Activated CD8-positive, alpha-beta memory T cell treated with anti-CD3 and anti-CD28 coated beads, Interleukin-2, amount 10 ng/mL, durations not matched to agents 7 days and 5 days (primary cell): ENCODE measurements at regions of chr17 and their contacts with region 1.

Region 1: DNA sequence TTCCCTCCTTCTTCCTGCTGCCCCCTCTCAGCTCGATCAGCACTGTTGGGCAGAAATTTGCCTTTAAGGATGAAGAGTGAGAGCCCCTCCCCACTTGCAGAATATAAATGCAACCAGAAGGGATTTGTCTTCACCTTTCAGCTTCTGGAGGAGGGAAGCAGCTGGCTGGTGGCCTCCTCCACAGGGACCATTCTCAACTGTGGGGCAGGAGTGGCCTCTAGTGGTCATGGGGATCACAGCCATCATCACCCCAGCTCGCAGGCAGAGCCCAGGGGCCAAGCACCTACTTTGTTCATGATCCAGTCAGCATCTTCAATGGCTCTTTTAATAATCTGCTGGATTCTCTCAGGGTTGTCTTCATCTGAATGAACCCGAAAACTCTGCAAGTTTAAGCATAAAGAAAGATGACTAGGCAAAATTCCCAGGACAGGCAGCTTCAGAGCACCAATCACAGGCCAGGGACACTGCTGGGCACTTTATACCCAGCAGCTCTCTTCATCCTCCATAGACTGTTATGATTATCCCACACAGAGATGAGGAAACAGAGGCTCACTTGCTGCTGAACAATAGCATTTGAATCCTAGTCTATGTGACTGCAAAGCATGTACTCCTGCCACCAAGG is 13.1 kb downstream of the LYRM9 start:
- DNase-seq: peak; percentile 85
- ATAC-seq: peak; percentile 90
- H3K4me3 Mint-ChIP-seq: no peak overlapping the region
- H3K27ac Mint-ChIP-seq: no peak overlapping the region
- H3K4me1 Mint-ChIP-seq: peaks cover 27% of the 10 kb centered on the region
- H3K27me3 Mint-ChIP-seq: peaks cover 6% of the 10 kb centered on the region

Region 2: DNA sequence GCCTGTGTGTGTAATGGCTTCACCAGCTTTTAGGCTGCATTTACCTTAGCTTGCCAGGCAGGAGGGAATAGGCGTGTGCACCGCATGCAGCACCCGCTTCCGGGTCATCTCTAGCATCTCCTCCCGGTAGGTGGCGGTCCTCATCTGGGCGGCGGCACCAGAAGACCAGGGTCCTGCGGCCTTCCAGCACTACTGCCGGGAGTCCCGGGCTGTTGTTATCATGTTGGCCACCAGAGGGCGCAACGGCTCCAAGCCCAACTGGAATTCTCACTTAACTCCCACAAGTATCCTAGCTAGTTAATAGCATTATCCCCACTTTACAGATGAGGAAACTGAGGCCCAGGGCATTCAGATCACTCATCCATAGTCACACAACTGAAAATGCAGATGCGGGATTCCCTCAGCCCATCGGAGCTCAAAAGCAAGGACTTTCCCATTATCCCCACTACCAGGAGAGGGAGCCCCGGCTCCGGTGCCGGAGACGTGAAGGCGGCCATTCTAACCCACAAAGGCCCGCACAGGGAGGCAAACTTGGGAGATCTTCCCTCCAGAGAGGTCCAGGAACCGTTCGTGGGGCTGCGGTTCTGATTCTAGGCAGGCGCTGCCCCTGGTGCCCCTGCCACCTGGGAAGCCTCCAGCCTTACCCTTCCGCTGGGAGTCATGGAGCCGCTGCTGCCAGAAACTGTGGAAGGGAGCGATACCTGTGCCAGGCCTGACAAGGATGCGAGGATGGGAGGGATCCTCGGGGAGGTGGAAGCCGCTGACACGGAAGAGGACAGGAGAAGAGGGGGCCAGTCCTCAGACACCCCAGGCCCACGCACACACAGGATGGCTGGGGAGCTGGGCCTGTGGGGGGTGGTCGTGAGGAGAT is 225.2 kb before region 1 on chr17:
- CTCF ChIA-PET with region 1: interaction called, 23 read pairs
- DNase-seq: peak; percentile 82
- ATAC-seq: peak; percentile 82
- H3K4me3 Mint-ChIP-seq: no peak overlapping the region
- H3K27ac Mint-ChIP-seq: no peak overlapping the region
- H3K4me1 Mint-ChIP-seq: peaks cover 6% of the 10 kb centered on the region
- H3K27me3 Mint-ChIP-seq: no peaks in the 10 kb centered on the region

Region 3: GRCh38 chr17:27754549-27754948 is 125.5 kb before region 1 on chr17:
- CTCF ChIA-PET with region 1: interaction called, 91 read pairs
- DNase-seq: no peak
- ATAC-seq: no peak
- H3K4me3 Mint-ChIP-seq: no peak overlapping the region
- H3K27ac Mint-ChIP-seq: no peak overlapping the region
- H3K4me1 Mint-ChIP-seq: no peaks in the 10 kb centered on the region
- H3K27me3 Mint-ChIP-seq: no peaks in the 10 kb centered on the region

Region 4: GRCh38 chr17:27760069-27760885 is 119.8 kb before region 1 on chr17:
- CTCF ChIA-PET with region 1: interaction called, 91 read pairs
- DNase-seq: peak; percentile 77
- ATAC-seq: peak; percentile 63
- H3K4me3 Mint-ChIP-seq: no peak overlapping the region
- H3K27ac Mint-ChIP-seq: no peak overlapping the region
- H3K4me1 Mint-ChIP-seq: no peaks in the 10 kb centered on the region
- H3K27me3 Mint-ChIP-seq: no peaks in the 10 kb centered on the region

Region 5: GRCh38 chr17:27858621-27859305 is 21.3 kb before region 1 on chr17:
- CTCF ChIA-PET with region 1: interaction called, 11 read pairs
- DNase-seq: no peak
- ATAC-seq: no peak
- H3K4me3 Mint-ChIP-seq: no peak overlapping the region
- H3K27ac Mint-ChIP-seq: no peak overlapping the region
- H3K4me1 Mint-ChIP-seq: peaks cover 14% of the 10 kb centered on the region
- H3K27me3 Mint-ChIP-seq: peaks cover 9% of the 10 kb centered on the region

Region 6: DNA sequence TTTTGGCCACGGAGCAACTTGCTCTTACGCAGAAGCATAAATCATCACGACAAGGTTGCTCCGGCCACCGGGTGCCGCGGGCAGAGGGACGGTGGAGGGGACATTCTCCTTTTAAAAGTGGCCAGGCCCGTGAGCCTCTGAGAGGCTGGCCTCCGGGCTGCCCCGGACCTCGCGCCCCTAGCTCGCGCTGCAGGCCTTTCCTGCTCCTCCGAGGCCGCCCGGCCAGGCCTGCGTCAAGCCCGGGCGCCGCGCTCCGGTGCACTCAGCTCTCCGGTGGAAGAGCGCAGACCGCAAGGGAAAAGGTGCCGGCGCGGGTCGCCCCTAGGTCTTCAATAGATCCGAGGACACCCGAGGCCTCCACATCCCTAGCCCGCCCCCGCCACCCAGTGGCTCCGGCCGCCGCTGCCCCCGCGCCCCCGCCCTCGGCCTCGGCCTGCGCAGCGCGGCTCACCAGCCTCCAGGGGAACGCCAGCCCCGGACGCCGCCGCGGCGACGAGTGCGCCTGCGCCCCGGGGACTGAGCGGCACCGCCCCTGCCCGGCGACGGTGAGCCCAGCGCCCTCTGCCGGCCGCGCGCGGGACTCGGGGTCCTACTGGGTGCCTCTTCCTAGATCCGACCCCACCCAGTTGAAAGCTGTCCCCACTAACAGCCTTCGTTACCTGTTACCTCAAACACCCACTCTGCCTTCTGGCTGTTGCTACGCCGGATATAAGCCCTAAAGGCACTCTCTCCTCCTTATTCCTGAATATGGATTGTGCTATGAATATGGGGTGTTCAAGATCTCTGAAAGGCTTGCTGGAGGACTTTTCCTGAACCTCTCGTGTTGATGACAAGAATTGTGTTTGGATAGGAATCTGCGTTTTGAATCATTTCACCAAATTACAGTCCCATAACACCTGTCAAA is 13.0 kb after region 1 on chr17 and contains the start of gene LYRM9:
- CTCF ChIA-PET with region 1: interaction called, 60 read pairs
- DNase-seq: peak; percentile 93
- ATAC-seq: peak; percentile 99
- H3K4me3 Mint-ChIP-seq: peak within 1 kb of the TSS; percentile 77
- H3K27ac Mint-ChIP-seq: peak within 1 kb of the TSS; percentile 52
- H3K4me1 Mint-ChIP-seq: peaks cover 19% of the 10 kb centered on the region
- H3K27me3 Mint-ChIP-seq: peaks cover 30% of the 10 kb centered on the region
- total RNA-seq, gene LYRM9: 1.7 to 5.1 TPM

Region 7: GRCh38 chr17:27907976-27908558 is 28.0 kb after region 1 on chr17:
- CTCF ChIA-PET with region 1: no interaction called
- DNase-seq: no peak
- ATAC-seq: no peak
- H3K4me3 Mint-ChIP-seq: no peak overlapping the region
- H3K27ac Mint-ChIP-seq: no peak overlapping the region
- H3K4me1 Mint-ChIP-seq: no peaks in the 10 kb centered on the region
- H3K27me3 Mint-ChIP-seq: peaks cover 21% of the 10 kb centered on the region

Region 8: DNA sequence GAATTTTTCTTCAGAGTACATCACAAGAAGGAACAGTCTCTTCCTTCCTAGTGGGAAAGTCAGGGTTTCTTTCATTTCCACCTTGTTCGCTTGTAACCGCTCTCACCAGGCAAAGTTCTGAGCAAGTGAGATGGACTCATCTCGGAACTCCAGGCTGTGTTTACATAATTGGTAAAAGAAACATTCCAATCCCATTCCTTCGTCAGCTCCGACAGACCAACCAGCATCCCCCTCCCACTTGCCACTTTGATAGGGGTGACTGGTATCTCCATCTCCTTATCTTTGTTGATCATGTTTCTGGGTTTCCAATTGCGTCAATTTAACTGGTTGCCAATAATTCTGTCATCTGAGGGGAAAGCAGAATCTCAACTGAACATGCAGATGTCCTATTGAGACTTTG is 49.9 kb after region 1 on chr17:
- CTCF ChIA-PET with region 1: no interaction called
- DNase-seq: no peak
- ATAC-seq: no peak
- H3K4me3 Mint-ChIP-seq: no peak overlapping the region
- H3K27ac Mint-ChIP-seq: no peak overlapping the region
- H3K4me1 Mint-ChIP-seq: no peaks in the 10 kb centered on the region
- H3K27me3 Mint-ChIP-seq: peaks cover 22% of the 10 kb centered on the region